A673 (cell line): ENCODE measurements at regions of chr9 and their contacts with region 1.

Region 1: GRCh38 chr9:99819856-99820684 is 1.6 kb upstream of the NR4A3 start:
- DNase-seq: peak; percentile 97
- H3K4me3 ChIP-seq: peak overlapping the region; percentile 85
- H3K27ac ChIP-seq: peak overlapping the region; percentile 98
- H3K4me1 ChIP-seq: peaks cover 25% of the 10 kb centered on the region
- H3K27me3 ChIP-seq: no peaks in the 10 kb centered on the region
- CTCF ChIP-seq: peak; percentile 33; the same call in 1 of the 2 replicates

Region 2: DNA sequence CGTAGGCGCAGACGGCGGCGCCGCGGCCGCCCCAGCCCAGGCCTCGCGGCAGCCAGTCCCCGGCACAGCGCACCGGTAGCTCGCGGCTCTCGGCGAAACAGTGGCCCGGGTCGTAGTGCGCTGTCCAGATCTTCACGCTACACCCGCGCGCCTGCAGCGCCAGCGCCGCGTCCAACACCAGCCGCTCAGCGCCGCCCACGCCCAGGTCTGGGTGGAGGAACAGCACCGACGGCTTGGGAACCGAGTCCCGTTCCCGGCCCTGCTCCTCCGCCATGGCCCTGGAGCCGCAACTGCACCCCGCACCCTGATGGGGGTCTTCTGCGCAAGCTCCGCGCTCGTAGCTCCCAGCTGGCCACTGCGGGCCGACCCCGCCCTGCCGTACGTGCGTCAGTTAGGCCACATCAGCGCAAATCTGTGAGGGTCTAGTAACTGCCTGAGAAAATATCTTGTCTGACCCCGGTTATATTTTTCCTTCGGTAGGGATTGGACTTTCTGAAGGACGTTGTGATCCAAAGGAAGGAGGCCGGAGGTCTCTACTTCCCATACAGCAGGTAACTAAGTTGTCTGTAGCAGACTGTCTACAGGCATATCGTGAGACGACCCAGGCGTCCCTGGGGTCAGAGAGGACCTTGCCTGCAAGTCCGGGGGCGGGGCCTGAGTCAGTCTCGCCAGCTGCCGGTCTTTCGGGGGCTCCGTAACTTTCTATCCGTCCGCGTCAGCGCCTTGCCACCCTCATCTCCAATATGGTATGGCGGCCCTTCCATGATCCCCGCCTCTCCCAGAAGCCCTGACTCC is 598.3 kb before region 1 on chr9 and contains the starts of genes ALG2 and SEC61B:
- CTCF ChIA-PET with region 1: no interaction called
- POLR2A ChIA-PET with region 1: no interaction called
- intact Hi-C with region 1: loop called (anchors 5 kb)
- DNase-seq: peak; percentile 95
- H3K4me3 ChIP-seq: peak within 1 kb of the TSS; percentile 72
- H3K27ac ChIP-seq: peak within 1 kb of the TSS; percentile 93
- H3K4me1 ChIP-seq: peaks cover 24% of the 10 kb centered on the region
- H3K27me3 ChIP-seq: no peaks in the 10 kb centered on the region
- CTCF ChIP-seq: no peak
- total RNA-seq, gene ALG2: 27.6 and 30.1 TPM in 2 replicates
- total RNA-seq, gene SEC61B: 175 and 183 TPM in 2 replicates

Region 3: GRCh38 chr9:99459919-99460318 is 360.2 kb before region 1 on chr9:
- CTCF ChIA-PET with region 1: no interaction called
- POLR2A ChIA-PET with region 1: no interaction called
- intact Hi-C with region 1: loop called (anchors 5 kb)
- DNase-seq: no peak
- H3K4me3 ChIP-seq: no peak overlapping the region
- H3K27ac ChIP-seq: peak overlapping the region; percentile 94
- H3K4me1 ChIP-seq: peaks cover 30% of the 10 kb centered on the region
- H3K27me3 ChIP-seq: no peaks in the 10 kb centered on the region
- CTCF ChIP-seq: no peak

Region 4: GRCh38 chr9:100011062-100011681 is 191.1 kb after region 1 on chr9:
- CTCF ChIA-PET with region 1: interaction called, 5 read pairs
- POLR2A ChIA-PET with region 1: no interaction called
- intact Hi-C with region 1: loop called (anchors 5 kb)
- DNase-seq: peak; percentile 70
- H3K4me3 ChIP-seq: no peak overlapping the region
- H3K27ac ChIP-seq: no peak overlapping the region
- H3K4me1 ChIP-seq: peaks cover 27% of the 10 kb centered on the region
- H3K27me3 ChIP-seq: no peaks in the 10 kb centered on the region
- CTCF ChIP-seq: peak; percentile 70

Region 5: DNA sequence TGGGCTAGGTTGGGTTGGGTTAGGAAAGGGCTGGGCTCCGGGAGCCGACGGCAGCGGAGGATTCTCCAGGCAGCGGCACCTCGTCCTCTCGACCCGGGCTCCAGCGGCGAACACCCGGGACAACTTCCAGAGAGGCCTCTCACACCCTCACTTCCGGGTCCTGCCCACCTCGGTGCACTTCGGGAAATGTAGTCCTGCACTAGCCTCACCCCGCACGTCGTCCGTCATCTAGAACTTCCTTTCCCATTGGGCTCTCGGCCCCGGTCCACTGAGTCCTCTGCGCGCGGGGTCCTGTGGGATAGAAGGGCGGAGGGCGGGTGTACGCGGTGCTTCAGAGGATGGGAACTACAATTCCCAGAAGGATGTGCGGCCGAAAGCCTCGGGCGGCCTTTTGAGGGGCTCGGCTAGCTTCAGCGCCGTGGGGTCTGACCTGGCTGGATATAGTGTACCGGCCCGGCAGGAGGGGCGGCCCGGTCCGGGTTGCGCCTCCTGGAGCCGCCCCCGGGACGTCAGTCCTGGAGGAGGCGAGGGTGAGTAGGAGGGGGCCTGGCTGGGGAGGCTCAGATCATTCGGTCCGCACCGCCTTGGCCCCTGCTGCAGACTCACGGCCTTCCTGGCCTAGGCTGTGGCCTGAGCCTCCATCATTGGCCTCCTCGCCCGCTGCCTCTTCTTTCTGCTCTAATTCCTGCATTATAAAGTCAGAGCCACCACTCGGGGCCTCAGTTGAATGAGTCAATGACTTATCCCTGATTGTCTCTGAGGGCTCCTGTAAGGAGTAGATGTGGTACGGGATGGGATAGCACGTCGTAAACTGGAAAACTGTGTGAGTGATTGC is 279.0 kb after region 1 on chr9 and contains the starts of genes ERP44 and INVS:
- CTCF ChIA-PET with region 1: no interaction called
- POLR2A ChIA-PET with region 1: no interaction called
- intact Hi-C with region 1: loop called (anchors 10 kb)
- DNase-seq: peak; percentile 100
- H3K4me3 ChIP-seq: peak within 1 kb of the TSS; percentile 90
- H3K27ac ChIP-seq: peak within 1 kb of the TSS; percentile 79
- H3K4me1 ChIP-seq: peaks cover 16% of the 10 kb centered on the region
- H3K27me3 ChIP-seq: no peaks in the 10 kb centered on the region
- CTCF ChIP-seq: no peak
- total RNA-seq, gene ERP44: 14.4 and 16.8 TPM in 2 replicates
- total RNA-seq, gene INVS: 21.8 and 23.3 TPM in 2 replicates

Region 6: DNA sequence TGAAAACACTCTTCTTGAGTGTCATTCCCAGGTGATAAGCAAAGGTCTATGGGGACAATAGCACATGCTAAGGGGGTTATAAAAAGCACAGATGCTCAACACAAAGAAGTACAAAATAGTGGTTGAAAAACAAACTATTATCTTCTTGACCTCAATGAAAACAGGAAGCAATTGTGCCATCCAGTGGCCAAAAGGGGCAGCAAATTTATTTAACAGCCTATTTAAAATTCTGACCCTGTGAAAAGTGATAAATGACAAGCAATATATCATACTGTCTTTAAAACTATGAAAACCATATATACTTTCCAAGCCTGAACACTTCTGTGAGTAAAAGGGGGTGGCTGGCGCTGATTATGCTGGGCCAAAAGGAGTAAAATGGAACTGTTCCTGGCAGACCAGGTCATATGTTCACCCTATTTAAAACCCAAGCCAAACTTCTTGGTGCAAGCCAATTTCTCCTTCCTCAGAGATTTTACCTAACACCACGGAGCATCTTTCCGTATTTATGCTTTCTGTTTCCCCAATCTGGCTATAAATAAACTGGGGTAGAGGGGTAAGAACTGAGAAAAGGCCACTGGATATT is 503.0 kb after region 1 on chr9:
- CTCF ChIA-PET with region 1: no interaction called
- POLR2A ChIA-PET with region 1: no interaction called
- intact Hi-C with region 1: loop called (anchors 5 kb)
- DNase-seq: peak; percentile 65
- H3K4me3 ChIP-seq: no peak overlapping the region
- H3K27ac ChIP-seq: no peak overlapping the region
- H3K4me1 ChIP-seq: no peaks in the 10 kb centered on the region
- H3K27me3 ChIP-seq: no peaks in the 10 kb centered on the region
- CTCF ChIP-seq: peak; percentile 78